ENCODE measurements at regions of chr7 and their contacts with region 1.

Region 1: GRCh38 chr7:24665564-24666294 is 91.5 kb downstream of the GSDME start:
- DNase-seq: peak in 1 of 2 donors; percentile 24
- ATAC-seq: peak in 1 of 8 donors; percentile 29
- H3K4me3 ChIP-seq: no peak overlapping the region
- H3K27ac ChIP-seq: no peak overlapping the region
- H3K4me1 ChIP-seq: peaks cover 0 to 16% (median 0%) of the 10 kb centered on the region in 9 donors
- H3K27me3 ChIP-seq: no peaks in the 10 kb centered on the region
- CTCF ChIP-seq: peak; percentile 34 to 76 (median 68)

Region 2: GRCh38 chr7:24290004-24290641 is 375.6 kb before region 1 on chr7:
- intact Hi-C with region 1: loop called in 1 of 10 experiments (anchors 10 kb)
- DNase-seq: no peak
- ATAC-seq: peak in 1 of 8 donors; percentile 69
- H3K4me3 ChIP-seq: no peak overlapping the region
- H3K27ac ChIP-seq: no peak overlapping the region
- H3K4me1 ChIP-seq: peaks cover 0 to under 1% (median 0%) of the 10 kb centered on the region in 9 donors
- H3K27me3 ChIP-seq: peaks cover 0 to 41% (median 31%) of the 10 kb centered on the region in 7 donors
- CTCF ChIP-seq: peak in 6 of 9 donors; percentile 15 to 43 (median 28)

Region 3: DNA sequence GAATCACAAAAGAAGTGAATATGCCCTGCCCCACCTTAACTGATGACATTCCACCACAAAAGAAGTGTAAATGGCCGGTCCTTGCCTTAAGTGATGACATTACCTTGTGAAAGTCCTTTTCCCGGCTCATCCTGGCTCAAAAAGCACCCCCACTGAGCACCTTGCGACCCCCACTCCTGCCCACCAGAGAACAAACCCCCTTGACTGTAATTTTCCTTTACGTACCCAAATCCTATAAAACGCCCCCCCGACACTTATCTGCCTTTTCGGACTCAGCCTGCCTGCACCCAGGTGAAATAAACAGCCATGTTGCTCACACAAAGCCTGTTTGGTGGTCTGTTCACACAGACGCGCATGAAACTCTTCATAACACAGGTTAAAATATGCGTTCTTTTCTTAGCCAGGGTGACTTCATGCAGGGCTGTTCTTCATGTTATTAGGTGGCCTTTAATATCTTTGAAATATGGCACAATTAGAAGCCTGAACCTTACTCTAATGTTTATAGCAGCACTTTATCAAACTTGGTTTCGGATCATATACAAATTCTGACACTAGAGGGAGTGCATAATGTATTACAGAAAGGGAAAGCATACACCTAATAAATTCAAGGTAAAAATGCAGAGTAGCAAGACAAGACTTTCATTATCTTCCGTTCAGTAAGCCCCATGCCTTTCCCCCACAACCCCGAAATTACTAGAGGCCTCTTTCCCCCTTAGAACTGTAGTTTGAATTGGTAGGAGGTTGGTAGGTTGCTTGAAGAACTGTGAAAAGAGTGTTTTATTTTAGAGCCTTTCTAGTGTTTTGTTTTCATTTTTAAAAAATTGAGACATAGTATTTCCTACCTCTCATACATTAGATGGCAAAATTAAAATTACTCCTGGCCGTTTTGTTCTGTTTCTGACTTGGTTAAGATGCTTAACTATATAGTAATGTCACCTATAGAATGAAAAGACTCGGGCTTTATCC is 263.8 kb before region 1 on chr7:
- intact Hi-C with region 1: loop called in 5 of 10 experiments (anchors 5 to 10 kb)
- DNase-seq: no peak
- ATAC-seq: peak in 1 of 8 donors; percentile 45
- H3K4me3 ChIP-seq: no peak overlapping the region
- H3K27ac ChIP-seq: no peak overlapping the region
- H3K4me1 ChIP-seq: no peaks in the 10 kb centered on the region
- H3K27me3 ChIP-seq: peaks cover 0 to 4% (median 0%) of the 10 kb centered on the region in 7 donors
- CTCF ChIP-seq: peak in 8 of 9 donors; percentile 9 to 57 (median 44)